Sciatic nerve (tissue), 2 donors: ENCODE measurements at regions of chr19 and their contacts with region 1.

Region 1: GRCh38 chr19:43726736-43727592 is 11.1 kb downstream of the IRGC start:
- DNase-seq: no peak
- ATAC-seq: no peak

Region 2: DNA sequence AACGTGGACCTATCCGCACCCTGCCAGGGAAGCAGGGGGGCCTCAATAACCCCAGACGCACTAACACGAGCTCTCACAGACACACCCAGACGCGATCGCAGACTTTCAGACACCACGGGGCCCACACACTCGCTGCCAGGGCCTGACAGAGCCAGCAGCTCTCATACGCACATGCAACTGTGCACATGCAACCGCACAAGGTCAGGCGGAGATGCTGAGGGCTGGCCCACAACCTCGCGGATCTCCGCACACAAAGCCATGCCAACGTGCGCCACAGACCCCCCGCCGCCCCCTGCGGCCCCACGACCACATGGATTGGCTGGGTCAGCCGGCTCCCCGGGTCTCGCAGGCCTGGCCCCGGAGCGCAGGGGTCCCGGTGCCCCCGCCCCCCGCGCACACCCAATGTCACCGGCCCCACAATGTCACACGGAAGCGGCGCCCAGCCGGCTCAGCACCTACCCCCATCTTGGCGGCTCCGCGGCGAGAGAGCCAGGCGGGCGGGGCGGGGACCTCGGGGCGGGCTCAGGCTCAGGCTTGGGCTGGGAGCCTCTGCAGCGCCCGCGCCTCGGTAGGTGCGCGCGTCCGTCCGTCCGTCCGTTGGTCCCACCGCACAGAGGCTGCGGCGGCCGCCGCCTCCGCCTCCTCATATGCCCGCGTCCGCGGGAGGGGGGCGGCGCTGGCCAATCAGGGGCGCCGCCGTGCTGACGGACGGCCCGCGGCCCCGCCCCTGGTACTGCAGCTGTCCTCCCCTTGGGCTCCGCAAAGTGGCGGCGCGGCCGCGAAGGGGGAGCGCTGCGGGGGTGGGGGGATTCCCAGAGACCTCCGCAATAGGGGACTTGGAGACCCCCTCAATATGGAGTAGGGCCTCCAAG is 1733.1 kb before region 1 on chr19 and contains the start of gene ATP1A3:
- intact Hi-C with region 1: loop called (anchors 5 kb)
- DNase-seq: no peak
- ATAC-seq: no peak
- total RNA-seq, gene ATP1A3: 0.18 TPM